IMR-90 (cell line): ENCODE measurements at regions of chr18 and their contacts with region 1.

Region 1: DNA sequence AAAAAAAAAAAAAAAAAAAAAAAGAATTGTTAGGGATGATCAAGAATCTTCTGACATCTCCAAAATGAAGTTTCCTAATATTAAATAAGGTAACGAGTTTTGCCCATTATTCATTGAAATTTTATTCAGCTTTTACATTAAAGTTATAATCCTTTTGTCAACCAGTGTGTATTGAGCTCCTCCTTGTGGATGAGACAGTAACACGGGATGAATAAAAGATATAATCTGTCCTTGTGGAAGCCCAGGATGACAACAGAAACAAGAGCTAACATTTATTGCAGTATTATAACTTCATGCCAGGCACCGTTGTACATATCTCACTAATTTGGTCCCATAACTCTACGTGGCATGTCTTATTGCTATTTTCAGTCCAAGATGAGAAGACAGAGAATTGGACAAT is 33.4 kb upstream of the SERPINB7 start:
- DNase-seq: peak; percentile 61
- ATAC-seq: no peak
- H3K4me3 ChIP-seq: no peak overlapping the region
- H3K27ac ChIP-seq: no peak overlapping the region
- H3K4me1 ChIP-seq: no peaks in the 10 kb centered on the region
- H3K27me3 ChIP-seq: no peaks in the 10 kb centered on the region
- CTCF ChIP-seq: peak; percentile 75
- POLR2A ChIP-seq: no peak
- RAD21 ChIP-seq: peak; percentile 86

Region 2: GRCh38 chr18:63511286-63511685 is 230.5 kb before region 1 on chr18:
- CTCF ChIA-PET with region 1: interaction called, 10 read pairs
- POLR2A ChIA-PET with region 1: no interaction called
- dilution Hi-C with region 1: no loop called
- in situ Hi-C with region 1: no loop called
- intact Hi-C with region 1: no loop called
- DNase-seq: peak; percentile 63
- ATAC-seq: peak; percentile 81
- H3K4me3 ChIP-seq: no peak overlapping the region
- H3K27ac ChIP-seq: no peak overlapping the region
- H3K4me1 ChIP-seq: no peaks in the 10 kb centered on the region
- H3K27me3 ChIP-seq: peaks cover 15% of the 10 kb centered on the region
- CTCF ChIP-seq: peak; percentile 58
- POLR2A ChIP-seq: no peak
- RAD21 ChIP-seq: peak; percentile 43

Region 3: GRCh38 chr18:63523660-63524059 is 218.1 kb before region 1 on chr18:
- CTCF ChIA-PET with region 1: interaction called, 18 read pairs
- POLR2A ChIA-PET with region 1: no interaction called
- dilution Hi-C with region 1: no loop called
- in situ Hi-C with region 1: loop called (anchors 10 kb)
- intact Hi-C with region 1: loop called (anchors 1 kb)
- DNase-seq: peak; percentile 10
- ATAC-seq: no peak
- H3K4me3 ChIP-seq: no peak overlapping the region
- H3K27ac ChIP-seq: no peak overlapping the region
- H3K4me1 ChIP-seq: no peaks in the 10 kb centered on the region
- H3K27me3 ChIP-seq: peaks cover 13% of the 10 kb centered on the region; the same call in 1 of the 2 replicates
- CTCF ChIP-seq: no peak; the same call in 1 of the 2 replicates
- POLR2A ChIP-seq: no peak
- RAD21 ChIP-seq: no peak

Region 4: DNA sequence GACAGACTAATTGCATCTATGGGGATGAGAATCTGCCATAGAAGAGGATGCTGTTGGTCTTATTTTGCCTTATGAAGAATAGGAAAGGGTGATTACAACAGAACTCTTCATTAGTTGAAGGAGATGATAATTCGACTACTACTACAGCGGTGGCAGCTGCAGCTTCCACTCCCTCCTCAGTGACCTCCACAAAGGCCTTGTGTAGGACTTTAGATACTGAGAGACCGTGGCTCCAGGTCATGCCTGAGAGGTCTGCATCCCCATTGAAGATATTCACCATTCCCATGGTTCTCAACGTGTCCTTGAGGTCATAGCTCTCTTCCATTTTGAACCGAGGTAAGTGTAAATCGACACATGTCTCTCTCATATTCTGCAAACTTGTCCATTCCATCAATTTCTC is 104.1 kb before region 1 on chr18:
- CTCF ChIA-PET with region 1: no interaction called
- POLR2A ChIA-PET with region 1: no interaction called
- dilution Hi-C with region 1: no loop called
- in situ Hi-C with region 1: no loop called
- intact Hi-C with region 1: no loop called
- DNase-seq: no peak
- ATAC-seq: no peak
- H3K4me3 ChIP-seq: no peak overlapping the region
- H3K27ac ChIP-seq: no peak overlapping the region
- H3K4me1 ChIP-seq: no peaks in the 10 kb centered on the region
- H3K27me3 ChIP-seq: no peaks in the 10 kb centered on the region
- CTCF ChIP-seq: no peak
- POLR2A ChIP-seq: no peak
- RAD21 ChIP-seq: no peak

Region 5: GRCh38 chr18:63664571-63664970 is 77.2 kb before region 1 on chr18:
- CTCF ChIA-PET with region 1: no interaction called
- POLR2A ChIA-PET with region 1: no interaction called
- dilution Hi-C with region 1: no loop called
- in situ Hi-C with region 1: no loop called
- intact Hi-C with region 1: no loop called
- DNase-seq: no peak
- ATAC-seq: no peak
- H3K4me3 ChIP-seq: no peak overlapping the region
- H3K27ac ChIP-seq: no peak overlapping the region
- H3K4me1 ChIP-seq: no peaks in the 10 kb centered on the region
- H3K27me3 ChIP-seq: no peaks in the 10 kb centered on the region
- CTCF ChIP-seq: no peak
- POLR2A ChIP-seq: no peak
- RAD21 ChIP-seq: no peak

Region 6: DNA sequence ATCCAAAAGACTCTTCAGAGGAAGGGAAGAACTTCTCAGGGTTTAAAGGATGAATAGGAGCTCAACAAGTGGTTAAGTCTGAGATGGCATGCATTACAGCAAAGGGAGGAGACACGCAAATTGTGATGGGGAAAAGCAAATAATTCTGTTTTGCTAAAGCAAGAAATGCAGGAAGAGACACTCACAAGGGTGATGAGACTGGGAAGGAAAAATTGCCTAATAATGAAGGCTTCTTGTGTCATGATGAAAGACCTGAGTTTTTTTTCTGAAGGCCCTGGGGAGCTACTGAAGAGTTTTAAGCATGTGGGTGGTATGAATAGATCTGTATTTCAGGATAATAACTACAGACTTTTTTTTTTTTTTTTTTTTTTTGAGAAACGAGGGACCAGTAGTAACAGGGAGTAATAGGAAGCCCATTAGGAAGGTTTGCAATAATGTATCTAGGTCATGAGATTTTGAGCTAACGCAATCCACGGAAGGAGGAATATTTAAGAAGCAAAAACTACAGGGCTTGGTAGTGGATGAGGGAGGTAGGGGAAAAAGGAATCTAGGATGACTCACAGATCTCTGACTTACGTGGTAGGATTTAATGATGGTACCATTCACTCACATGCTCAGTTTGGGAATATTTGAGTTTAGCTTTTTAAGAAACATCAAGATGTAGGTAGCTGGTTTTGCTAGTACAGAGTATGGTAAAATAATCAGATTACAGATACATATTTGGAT is 64.1 kb before region 1 on chr18:
- CTCF ChIA-PET with region 1: no interaction called
- POLR2A ChIA-PET with region 1: interaction called, 19 read pairs
- dilution Hi-C with region 1: no loop called
- in situ Hi-C with region 1: no loop called
- intact Hi-C with region 1: no loop called
- DNase-seq: peak; percentile 28
- ATAC-seq: no peak
- H3K4me3 ChIP-seq: no peak overlapping the region
- H3K27ac ChIP-seq: no peak overlapping the region
- H3K4me1 ChIP-seq: no peaks in the 10 kb centered on the region; the same call in 1 of the 2 replicates
- H3K27me3 ChIP-seq: no peaks in the 10 kb centered on the region; the same call in 1 of the 2 replicates
- CTCF ChIP-seq: no peak
- POLR2A ChIP-seq: no peak
- RAD21 ChIP-seq: no peak